PC-9 (cell line): ENCODE measurements at regions of chr4 and their contacts with region 1.

Region 1: DNA sequence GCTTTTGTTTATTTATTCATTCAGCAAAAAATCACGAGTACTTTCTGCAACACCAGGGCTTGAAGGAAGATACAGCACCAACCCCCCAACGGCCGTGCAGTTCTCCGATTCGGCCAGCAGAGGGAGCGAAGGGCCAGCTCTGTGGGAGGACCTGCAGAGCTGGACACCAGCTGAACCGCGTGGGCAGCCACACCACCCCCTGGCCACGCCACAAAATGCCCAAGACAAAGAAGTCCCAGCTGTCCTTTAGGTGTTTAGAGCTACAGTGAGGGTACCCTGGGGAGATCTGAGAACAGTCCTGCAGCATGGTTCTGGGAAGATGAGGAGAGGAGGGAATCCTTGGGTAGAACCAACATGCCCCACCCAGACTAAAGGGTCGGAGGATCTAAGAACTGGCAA is 83.1 kb downstream of the RELL1 start:
- DNase-seq: peak; percentile 46 to 73
- H3K4me3 ChIP-seq: no peak overlapping the region
- H3K27ac ChIP-seq: no peak overlapping the region
- H3K4me1 ChIP-seq: peaks cover 9% of the 10 kb centered on the region
- H3K27me3 ChIP-seq: no peaks in the 10 kb centered on the region
- CTCF ChIP-seq: peak; percentile 98

Region 2: GRCh38 chr4:37648096-37648817 is 45.2 kb after region 1 on chr4:
- CTCF ChIA-PET with region 1: interaction called, 23 read pairs
- POLR2A ChIA-PET with region 1: no interaction called
- intact Hi-C with region 1: no loop called
- DNase-seq: peak; percentile 83 to 95
- H3K4me3 ChIP-seq: no peak overlapping the region
- H3K27ac ChIP-seq: peak overlapping the region; percentile 51
- H3K4me1 ChIP-seq: peaks cover 29% of the 10 kb centered on the region
- H3K27me3 ChIP-seq: no peaks in the 10 kb centered on the region
- CTCF ChIP-seq: no peak

Region 3: GRCh38 chr4:37686373-37687193 is 83.5 kb after region 1 on chr4 and contains the start of gene RELL1:
- CTCF ChIA-PET with region 1: interaction called, 13 read pairs
- POLR2A ChIA-PET with region 1: no interaction called
- intact Hi-C with region 1: loop called (anchors 5 kb)
- DNase-seq: peak; percentile 94 to 100
- H3K4me3 ChIP-seq: peak within 1 kb of the TSS; percentile 77
- H3K27ac ChIP-seq: no peak within 1 kb of the TSS
- H3K4me1 ChIP-seq: peaks cover 12% of the 10 kb centered on the region; the same call in 1 of the 2 replicates
- H3K27me3 ChIP-seq: no peaks in the 10 kb centered on the region
- CTCF ChIP-seq: no peak
- total RNA-seq, gene RELL1: 11.9 and 18.5 TPM in 2 replicates

Region 4: GRCh38 chr4:37793562-37793961 is 190.5 kb after region 1 on chr4:
- CTCF ChIA-PET with region 1: no interaction called
- POLR2A ChIA-PET with region 1: no interaction called
- intact Hi-C with region 1: loop called (anchors 2 kb)
- DNase-seq: peak in 1 of 2 experiments; percentile 13
- H3K4me3 ChIP-seq: no peak overlapping the region
- H3K27ac ChIP-seq: no peak overlapping the region
- H3K4me1 ChIP-seq: no peaks in the 10 kb centered on the region
- H3K27me3 ChIP-seq: 0 out of 2 replicates have a peak, but pooled peaks cover 3% of the 10 kb centered on the region
- CTCF ChIP-seq: peak; percentile 66

Region 5: GRCh38 chr4:38034986-38035882 is 432.2 kb after region 1 on chr4:
- CTCF ChIA-PET with region 1: no interaction called
- POLR2A ChIA-PET with region 1: no interaction called
- intact Hi-C with region 1: loop called (anchors 2 kb)
- DNase-seq: peak; percentile 10 to 48
- H3K4me3 ChIP-seq: no peak overlapping the region
- H3K27ac ChIP-seq: no peak overlapping the region
- H3K4me1 ChIP-seq: no peaks in the 10 kb centered on the region
- H3K27me3 ChIP-seq: no peaks in the 10 kb centered on the region
- CTCF ChIP-seq: peak; percentile 85